CD8-positive, alpha-beta T cell (primary cell): ENCODE measurements at regions of chr6 and their contacts with region 1.

Region 1: GRCh38 chr6:162109480-162110050 is 618.0 kb downstream of the PRKN start:
- DNase-seq: no peak
- ATAC-seq: no peak
- H3K4me3 ChIP-seq: no peak overlapping the region
- H3K4me3 Mint-ChIP-seq: no peak overlapping the region
- H3K27ac ChIP-seq: no peak overlapping the region
- H3K27ac Mint-ChIP-seq: no peak overlapping the region
- H3K4me1 ChIP-seq: no peaks in the 10 kb centered on the region
- H3K4me1 Mint-ChIP-seq: no peaks in the 10 kb centered on the region
- H3K27me3 ChIP-seq: no peaks in the 10 kb centered on the region
- H3K27me3 Mint-ChIP-seq: no peaks in the 10 kb centered on the region
- CTCF ChIP-seq: no peak

Region 2: GRCh38 chr6:161452241-161452640 is 657.3 kb before region 1 on chr6:
- CTCF ChIA-PET with region 1: no interaction called
- POLR2A ChIA-PET with region 1: no interaction called
- intact Hi-C with region 1: loop called in 1 of 2 experiments (anchors 5 kb)
- DNase-seq: no peak
- ATAC-seq: no peak
- H3K4me3 ChIP-seq: no peak overlapping the region
- H3K4me3 Mint-ChIP-seq: no peak overlapping the region
- H3K27ac ChIP-seq: no peak overlapping the region
- H3K27ac Mint-ChIP-seq: no peak overlapping the region
- H3K4me1 ChIP-seq: no peaks in the 10 kb centered on the region
- H3K4me1 Mint-ChIP-seq: no peaks in the 10 kb centered on the region
- H3K27me3 ChIP-seq: no peaks in the 10 kb centered on the region
- H3K27me3 Mint-ChIP-seq: peaks cover 2% of the 10 kb centered on the region
- CTCF ChIP-seq: no peak